ENCODE measurements at regions of chr1 and their contacts with region 1.

Region 1: DNA sequence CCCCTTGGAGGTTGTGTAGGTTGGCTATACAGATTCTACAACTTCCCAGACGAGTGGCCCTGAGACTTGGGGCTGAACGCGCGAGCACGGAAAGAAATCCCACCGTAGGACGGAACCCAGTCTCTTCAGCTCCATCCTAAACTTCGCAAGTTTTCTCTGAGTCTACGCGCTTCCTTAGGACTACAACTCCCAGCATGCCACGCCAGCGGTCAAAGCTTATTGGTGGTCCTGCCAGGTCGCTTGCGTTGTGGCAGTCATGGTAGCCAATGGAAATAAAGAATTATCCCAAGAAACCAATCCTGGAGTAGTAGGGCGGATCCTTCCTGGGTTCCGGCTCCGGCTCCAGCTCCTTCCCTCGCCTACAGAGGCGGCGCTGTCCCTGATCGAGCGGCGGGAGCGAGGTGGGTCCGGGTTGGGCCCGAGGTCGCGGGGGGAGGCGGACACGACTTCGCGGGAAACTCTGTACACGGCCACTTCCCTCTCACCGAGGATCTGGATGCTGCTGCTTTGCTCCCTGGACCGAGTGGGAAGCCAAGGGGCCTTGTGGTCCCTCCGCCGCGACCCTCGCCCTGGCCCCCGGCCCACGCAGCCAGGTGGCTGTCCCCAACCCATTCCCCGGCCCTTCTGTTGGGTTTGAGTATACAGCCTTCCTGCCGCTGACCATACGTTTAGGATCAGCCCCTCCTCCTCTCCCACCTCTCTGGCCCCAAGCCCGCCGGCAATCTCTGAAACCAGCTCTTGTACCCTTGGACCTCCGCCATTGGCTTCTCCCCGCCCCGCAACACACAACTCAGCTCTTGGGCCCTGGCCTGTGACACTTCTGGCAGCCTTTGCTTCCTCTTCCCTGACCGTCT is at the start of gene ZNF691:
- DNase-seq: peak; percentile 91
- H3K4me3 Mint-ChIP-seq: peak within 1 kb of the TSS; percentile 87
- H3K27ac Mint-ChIP-seq: peak within 1 kb of the TSS; percentile 79
- H3K4me1 Mint-ChIP-seq: peaks cover 33% of the 10 kb centered on the region
- H3K27me3 Mint-ChIP-seq: no peaks in the 10 kb centered on the region
- total RNA-seq, gene ZNF691: 10.4 to 12.6 TPM

Region 2: GRCh38 chr1:42681741-42682483 is 164.6 kb before region 1 on chr1 and contains the start of gene YBX1:
- CTCF ChIA-PET with region 1: interaction called, 4 read pairs
- POLR2A ChIA-PET with region 1: interaction called, 15 read pairs
- DNase-seq: peak; percentile 96
- H3K4me3 Mint-ChIP-seq: peak within 1 kb of the TSS; percentile 97
- H3K27ac Mint-ChIP-seq: peak within 1 kb of the TSS; percentile 96
- H3K4me1 Mint-ChIP-seq: peaks cover 48% of the 10 kb centered on the region
- H3K27me3 Mint-ChIP-seq: no peaks in the 10 kb centered on the region
- total RNA-seq, gene YBX1: 575 to 580 TPM

Region 3: DNA sequence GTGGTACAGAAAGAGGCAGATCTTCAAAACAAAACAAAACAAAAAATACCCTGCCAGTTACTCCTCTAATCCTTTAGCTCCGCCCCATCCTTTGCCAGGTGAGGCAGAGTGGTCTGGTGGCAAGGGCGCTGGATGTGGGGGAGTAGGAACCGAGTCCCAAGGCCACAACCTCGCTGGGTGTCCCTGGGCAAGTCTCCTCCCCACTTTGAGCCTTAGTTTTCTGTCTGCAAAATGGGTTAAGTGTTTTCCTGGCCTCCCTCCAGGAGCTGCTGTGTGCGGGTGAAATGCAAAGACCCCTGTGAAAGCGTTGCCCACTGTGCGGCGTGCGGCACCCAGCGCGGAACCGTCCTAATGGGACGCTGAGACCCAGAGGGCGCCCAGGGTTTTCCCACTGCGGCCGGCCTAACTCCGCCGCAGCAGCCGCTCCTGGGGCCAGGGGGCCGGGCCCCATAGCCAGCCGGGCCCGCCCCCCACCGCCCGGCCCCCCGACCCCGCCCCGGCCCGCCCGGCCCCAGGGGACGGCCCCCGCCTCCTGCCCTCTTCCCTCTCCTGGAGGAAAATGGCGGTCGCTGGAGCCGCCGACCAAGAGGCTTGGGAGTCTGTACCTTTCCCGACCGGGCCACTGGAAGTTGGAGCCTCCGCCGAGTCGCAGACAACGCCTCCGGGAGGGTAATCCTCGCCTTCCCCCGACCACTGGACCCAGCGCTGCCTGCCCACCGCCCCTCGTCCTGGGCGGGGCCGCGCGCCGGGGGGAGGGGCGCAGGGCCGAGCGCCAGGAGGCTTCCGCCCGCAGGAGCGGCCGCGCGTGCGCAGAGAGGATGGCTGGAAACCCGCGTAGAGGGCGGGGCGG is 29.7 kb before region 1 on chr1 and contains the starts of genes ERMAP and SVBP:
- CTCF ChIA-PET with region 1: interaction called, 18 read pairs
- POLR2A ChIA-PET with region 1: interaction called, 32 read pairs
- DNase-seq: peak; percentile 94
- H3K4me3 Mint-ChIP-seq: peak within 1 kb of the TSS; percentile 79
- H3K27ac Mint-ChIP-seq: peak within 1 kb of the TSS; percentile 75
- H3K4me1 Mint-ChIP-seq: peaks cover 26% of the 10 kb centered on the region
- H3K27me3 Mint-ChIP-seq: no peaks in the 10 kb centered on the region
- total RNA-seq, gene ERMAP: 5.0 to 5.9 TPM
- total RNA-seq, gene SVBP: 17.4 to 19.2 TPM

Region 4: DNA sequence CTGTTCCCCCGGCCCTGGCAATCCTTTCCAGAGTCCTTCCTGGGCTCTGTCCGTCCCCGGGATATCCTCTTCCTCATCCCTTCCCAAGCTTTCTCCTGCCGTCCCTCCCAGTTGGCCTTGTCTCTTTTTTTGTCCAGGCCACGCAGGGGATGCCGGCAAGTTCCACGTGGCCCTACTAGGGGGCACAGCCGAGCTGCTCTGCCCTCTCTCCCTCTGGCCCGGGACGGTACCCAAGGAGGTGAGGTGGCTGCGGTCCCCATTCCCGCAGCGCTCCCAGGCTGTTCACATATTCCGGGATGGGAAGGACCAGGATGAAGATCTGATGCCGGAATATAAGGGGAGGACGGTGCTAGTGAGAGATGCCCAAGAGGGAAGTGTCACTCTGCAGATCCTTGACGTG is 15.9 kb before region 1 on chr1:
- CTCF ChIA-PET with region 1: interaction called, 12 read pairs
- POLR2A ChIA-PET with region 1: interaction called, 6 read pairs
- DNase-seq: no peak
- H3K4me3 Mint-ChIP-seq: no peak overlapping the region
- H3K27ac Mint-ChIP-seq: no peak overlapping the region
- H3K4me1 Mint-ChIP-seq: no peaks in the 10 kb centered on the region
- H3K27me3 Mint-ChIP-seq: no peaks in the 10 kb centered on the region

Region 5: GRCh38 chr1:42913426-42914091 is 67.1 kb after region 1 on chr1:
- CTCF ChIA-PET with region 1: interaction called, 19 read pairs
- POLR2A ChIA-PET with region 1: no interaction called
- DNase-seq: peak; percentile 62
- H3K4me3 Mint-ChIP-seq: no peak overlapping the region
- H3K27ac Mint-ChIP-seq: no peak overlapping the region
- H3K4me1 Mint-ChIP-seq: peaks cover 16% of the 10 kb centered on the region
- H3K27me3 Mint-ChIP-seq: peaks cover 9% of the 10 kb centered on the region